Common myeloid progenitor, CD34-positive (primary cell): ENCODE measurements at regions of chr10 and their contacts with region 1.

Region 1: DNA sequence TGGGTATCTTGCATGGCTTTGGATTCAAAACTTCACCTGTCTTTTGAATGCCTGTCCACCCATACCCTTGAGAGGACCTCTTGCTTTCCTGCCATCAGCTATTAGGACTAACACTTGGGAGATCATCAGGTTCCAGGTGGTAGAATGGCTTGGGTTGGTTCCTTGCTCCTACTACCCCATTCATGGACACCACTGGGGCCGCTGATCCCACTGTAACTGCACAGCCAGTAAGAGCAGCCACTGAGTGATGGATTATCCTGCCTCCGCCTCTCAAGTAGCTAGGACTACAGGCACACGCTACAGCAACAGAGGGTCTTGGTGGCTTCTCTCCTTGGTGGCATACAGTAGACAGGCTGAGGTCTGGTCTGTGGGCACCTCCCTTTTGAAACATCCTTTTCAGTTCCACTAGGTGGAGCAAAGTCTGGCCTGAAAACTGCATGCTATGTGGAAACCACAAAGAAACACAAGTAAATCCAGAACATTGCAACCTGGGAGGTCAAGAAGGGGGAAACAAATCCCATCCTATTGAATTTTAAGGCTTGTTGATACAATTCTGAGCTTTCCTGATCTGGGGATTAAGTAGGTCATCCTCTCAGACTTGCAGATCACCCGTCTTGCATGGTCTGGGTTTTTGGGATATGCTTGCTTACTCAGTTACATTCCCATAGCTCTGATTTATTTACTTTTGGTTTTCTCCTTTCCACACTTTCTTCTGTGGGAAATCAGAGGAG is 9.4 kb downstream of the WBP1L start:
- DNase-seq: peak; percentile 49 to 74 (median 71)
- H3K4me3 ChIP-seq: no peak overlapping the region
- H3K27ac ChIP-seq: no peak overlapping the region
- H3K4me1 ChIP-seq: peaks cover 0 to 10% (median 5%) of the 10 kb centered on the region in 4 experiments
- H3K27me3 ChIP-seq: no peaks in the 10 kb centered on the region

Region 2: GRCh38 chr10:102729029-102730026 is 23.8 kb before region 1 on chr10:
- CTCF ChIA-PET with region 1: interaction called, 10 read pairs
- POLR2A ChIA-PET with region 1: interaction called, 3 read pairs
- DNase-seq: peak; percentile 77 to 85 (median 84)
- H3K4me3 ChIP-seq: peak overlapping the region in 1 of 7 experiments; percentile 7
- H3K27ac ChIP-seq: no peak overlapping the region
- H3K4me1 ChIP-seq: peaks cover 0 to 17% (median 13%) of the 10 kb centered on the region in 4 experiments
- H3K27me3 ChIP-seq: no peaks in the 10 kb centered on the region

Region 3: GRCh38 chr10:102764389-102765178 is 11.5 kb after region 1 on chr10:
- CTCF ChIA-PET with region 1: interaction called, 29 read pairs
- POLR2A ChIA-PET with region 1: no interaction called
- DNase-seq: no peak
- H3K4me3 ChIP-seq: no peak overlapping the region
- H3K27ac ChIP-seq: no peak overlapping the region
- H3K4me1 ChIP-seq: peaks cover 9 to 18% (median 13%) of the 10 kb centered on the region in 4 experiments
- H3K27me3 ChIP-seq: no peaks in the 10 kb centered on the region

Region 4: DNA sequence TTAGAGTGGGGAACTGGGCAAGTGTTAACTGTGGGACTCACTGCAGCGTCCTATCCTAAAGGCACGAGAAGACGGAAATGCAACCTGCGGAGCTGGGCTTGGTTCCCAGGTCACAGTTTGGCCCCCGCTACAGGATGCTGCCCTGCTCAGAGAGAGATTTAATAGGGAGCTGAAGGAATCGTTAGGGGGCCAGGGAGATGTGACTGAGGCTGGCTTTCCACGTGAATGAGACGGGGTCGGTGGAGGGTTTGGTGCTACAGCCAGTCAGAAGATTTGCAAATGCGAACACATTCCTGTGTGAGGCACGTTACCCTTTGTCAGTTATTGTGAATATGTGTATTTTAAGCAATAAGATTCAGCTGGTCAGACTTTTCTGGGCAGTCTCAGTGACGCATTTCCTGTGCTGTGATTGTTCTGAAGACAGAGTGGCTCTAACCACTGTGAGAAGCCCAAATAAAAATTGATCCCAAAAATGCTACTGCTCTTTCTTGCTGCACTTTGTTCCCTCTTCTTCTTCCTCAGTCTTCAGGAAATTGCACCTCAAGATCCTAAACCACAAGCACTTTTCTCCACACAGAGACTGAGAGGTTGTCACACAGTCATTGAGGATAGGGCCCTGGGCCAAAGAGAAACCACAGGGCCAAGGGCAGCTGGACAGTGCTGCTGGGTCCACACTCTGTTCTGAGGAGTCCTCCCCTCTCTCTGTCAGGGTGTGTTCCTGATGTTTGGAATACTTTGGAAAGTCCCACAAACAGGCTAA is 62.9 kb after region 1 on chr10:
- CTCF ChIA-PET with region 1: interaction called, 27 read pairs
- POLR2A ChIA-PET with region 1: interaction called, 3 read pairs
- DNase-seq: peak in 1 of 3 donors; percentile 32
- H3K4me3 ChIP-seq: no peak overlapping the region
- H3K27ac ChIP-seq: no peak overlapping the region
- H3K4me1 ChIP-seq: peaks cover 9 to 71% (median 42%) of the 10 kb centered on the region in 4 experiments
- H3K27me3 ChIP-seq: no peaks in the 10 kb centered on the region

Region 5: DNA sequence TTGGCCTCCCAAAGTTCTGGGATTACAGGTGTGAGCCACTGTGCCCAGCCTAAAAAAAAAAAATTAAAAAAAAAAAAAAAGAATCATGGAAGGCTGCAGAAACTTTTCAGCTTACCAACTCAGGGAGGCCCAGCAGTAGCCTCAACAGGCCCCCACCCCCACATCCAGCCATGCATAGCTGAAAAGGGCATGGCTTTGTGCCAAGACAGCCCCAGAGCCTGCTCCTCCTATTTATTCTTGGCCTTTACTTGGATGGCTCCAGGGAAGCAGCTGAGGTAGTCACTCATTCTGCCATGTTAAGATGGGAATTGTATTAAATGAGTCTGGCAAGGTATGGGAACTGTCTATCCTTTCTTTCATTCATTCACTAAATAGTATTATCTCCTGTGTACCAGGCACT is 151.2 kb after region 1 on chr10:
- CTCF ChIA-PET with region 1: interaction called, 27 read pairs
- POLR2A ChIA-PET with region 1: no interaction called
- DNase-seq: no peak
- H3K4me3 ChIP-seq: no peak overlapping the region
- H3K27ac ChIP-seq: no peak overlapping the region
- H3K4me1 ChIP-seq: peaks cover 0 to 11% (median 3%) of the 10 kb centered on the region in 4 experiments
- H3K27me3 ChIP-seq: no peaks in the 10 kb centered on the region

Region 6: DNA sequence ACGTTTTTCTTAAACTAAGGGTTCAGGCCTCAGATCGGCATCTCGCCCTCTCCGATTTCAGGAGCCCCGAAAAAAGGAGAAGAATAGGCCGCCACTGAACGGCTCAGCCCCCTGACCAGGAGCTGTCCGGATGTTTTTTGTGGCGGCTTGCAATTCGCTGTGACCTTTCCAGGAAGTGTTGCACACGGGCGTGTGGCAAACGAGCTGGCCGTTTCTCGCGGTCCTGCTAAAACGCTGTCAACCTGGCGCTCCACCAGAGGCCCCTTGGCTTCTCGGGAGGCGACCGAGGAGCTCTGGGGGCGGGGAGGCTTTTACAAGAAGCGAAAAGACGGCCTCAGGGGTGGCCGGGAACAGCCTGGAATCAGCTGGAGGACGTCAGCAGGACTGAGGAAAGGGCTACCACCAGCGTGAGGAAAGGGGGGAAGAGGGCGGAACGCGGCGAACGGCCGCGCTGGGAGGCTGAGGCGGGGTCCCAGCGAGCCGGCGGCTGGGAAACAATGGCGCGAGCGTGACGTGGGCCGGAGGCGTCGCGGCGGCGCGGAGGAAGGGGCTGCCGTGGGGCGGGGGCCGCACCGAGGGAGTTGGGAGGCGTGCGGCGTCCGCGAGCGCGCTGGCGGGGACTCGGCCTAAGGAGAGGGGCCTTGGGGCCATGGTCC is 439.5 kb after region 1 on chr10:
- CTCF ChIA-PET with region 1: no interaction called
- POLR2A ChIA-PET with region 1: no interaction called
- DNase-seq: peak; percentile 72 to 91 (median 87)
- H3K4me3 ChIP-seq: peak overlapping the region; percentile 84 to 93 (median 89)
- H3K27ac ChIP-seq: peak overlapping the region; percentile 90 to 96
- H3K4me1 ChIP-seq: peaks cover 35 to 61% (median 44%) of the 10 kb centered on the region in 4 experiments
- H3K27me3 ChIP-seq: no peaks in the 10 kb centered on the region